ENCODE measurements at regions of chr11 and their contacts with region 1.

Region 1: DNA sequence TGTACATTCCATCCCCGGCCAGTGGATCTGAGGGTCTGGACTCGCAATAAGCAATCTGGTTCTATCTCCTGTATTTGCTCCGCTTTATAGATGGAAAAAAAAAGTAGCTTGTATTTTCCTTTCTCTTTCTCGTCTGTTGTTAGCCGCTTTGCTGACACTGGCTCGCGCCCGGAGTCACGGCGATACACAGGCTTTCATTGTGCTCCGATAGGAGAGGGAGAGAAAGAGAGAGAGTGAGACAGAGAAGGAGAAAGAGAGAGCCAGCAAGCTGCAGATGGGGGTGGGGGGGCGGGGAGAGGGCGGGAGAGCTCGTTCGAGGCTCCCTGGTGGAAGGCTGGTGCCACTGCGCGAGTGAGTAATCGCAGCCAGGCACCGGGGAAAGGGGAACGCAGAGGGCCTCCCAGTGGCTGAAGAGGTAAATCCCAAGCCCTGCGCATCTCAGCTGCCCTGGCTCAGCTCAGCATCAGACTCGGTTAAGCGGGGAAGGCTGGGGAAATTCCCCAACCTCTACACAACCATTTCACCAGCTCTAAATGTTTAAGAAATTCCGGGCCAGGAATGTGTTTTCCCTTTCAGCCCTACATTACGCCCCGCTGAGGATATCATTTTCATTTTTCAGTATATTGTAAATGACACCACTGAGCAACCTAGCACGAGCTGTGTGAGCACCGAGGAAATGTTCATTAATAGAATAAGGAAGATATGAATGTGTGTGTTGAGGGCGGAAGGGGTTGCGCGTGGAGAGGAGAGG is at the start of gene MAML2:
- DNase-seq: peak; percentile 76
- H3K4me3 ChIP-seq: peak within 1 kb of the TSS; percentile 81
- CTCF ChIP-seq: peak; percentile 94

Region 2: DNA sequence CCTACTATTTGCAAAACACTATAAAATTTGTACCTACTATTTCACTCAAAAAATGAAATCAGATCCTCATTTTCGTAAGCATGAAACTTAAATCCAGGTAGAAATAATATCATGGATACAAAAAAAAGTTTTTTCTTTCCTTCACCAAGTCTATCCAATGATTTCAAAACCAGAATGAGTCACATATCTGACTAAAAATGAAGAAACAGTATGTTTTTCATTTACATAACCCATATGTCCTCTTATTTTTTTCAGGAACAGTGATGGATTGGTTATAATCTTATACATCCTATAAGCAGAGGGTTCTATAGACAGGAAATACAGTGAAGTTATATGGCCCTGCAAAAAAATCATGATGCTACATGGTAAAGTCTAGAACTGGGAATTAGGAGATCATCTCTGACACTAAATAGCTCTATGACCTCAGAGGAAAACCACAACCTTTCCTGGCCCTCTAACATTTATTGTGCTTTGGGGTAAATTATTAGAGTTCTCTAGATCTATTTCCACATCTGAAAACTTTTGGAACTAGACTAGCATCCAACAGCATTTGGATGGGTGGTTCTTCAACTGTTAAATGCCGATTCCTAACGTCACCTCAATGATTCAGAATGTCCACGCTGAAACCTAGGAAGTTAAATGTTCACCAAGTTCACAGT is 430.1 kb before region 1 on chr11:
- CTCF ChIA-PET with region 1: no interaction called
- POLR2A ChIA-PET with region 1: no interaction called
- DNase-seq: no peak
- H3K4me3 ChIP-seq: no peak overlapping the region
- CTCF ChIP-seq: no peak

Region 3: GRCh38 chr11:96014217-96014616 is 328.9 kb before region 1 on chr11:
- CTCF ChIA-PET with region 1: interaction called, 14 read pairs
- POLR2A ChIA-PET with region 1: no interaction called
- DNase-seq: no peak
- H3K4me3 ChIP-seq: no peak overlapping the region
- CTCF ChIP-seq: no peak

Region 4: DNA sequence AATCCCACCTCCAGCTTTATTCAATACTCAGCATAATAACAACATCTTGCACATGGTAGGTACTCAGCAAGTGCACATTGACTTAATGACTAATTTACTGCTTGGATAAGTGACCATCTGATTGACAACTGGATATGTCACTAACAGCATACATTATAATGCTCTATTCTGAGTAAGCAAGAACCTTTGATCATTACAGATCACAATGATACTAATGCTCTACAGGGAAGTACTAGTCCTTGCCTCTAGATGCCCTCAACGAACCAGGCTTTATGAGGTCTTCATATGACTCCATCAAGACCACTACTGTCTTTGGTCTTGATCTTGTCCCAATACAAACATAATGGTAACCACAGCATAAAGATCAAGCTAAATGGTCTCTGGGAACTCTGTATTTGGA is 251.7 kb before region 1 on chr11:
- CTCF ChIA-PET with region 1: interaction called, 15 read pairs
- POLR2A ChIA-PET with region 1: interaction called, 6 read pairs
- DNase-seq: no peak
- H3K4me3 ChIP-seq: no peak overlapping the region
- CTCF ChIP-seq: no peak

Region 5: GRCh38 chr11:96162816-96163499 is 180.2 kb before region 1 on chr11:
- CTCF ChIA-PET with region 1: interaction called, 17 read pairs
- POLR2A ChIA-PET with region 1: interaction called, 10 read pairs
- DNase-seq: no peak
- H3K4me3 ChIP-seq: no peak overlapping the region
- CTCF ChIP-seq: no peak

Region 6: GRCh38 chr11:96228473-96228891 is 114.7 kb before region 1 on chr11:
- CTCF ChIA-PET with region 1: interaction called, 20 read pairs
- POLR2A ChIA-PET with region 1: no interaction called
- DNase-seq: peak; percentile 67
- H3K4me3 ChIP-seq: no peak overlapping the region
- CTCF ChIP-seq: no peak

Region 7: GRCh38 chr11:96254087-96254486 is 89.0 kb before region 1 on chr11:
- CTCF ChIA-PET with region 1: interaction called, 10 read pairs
- POLR2A ChIA-PET with region 1: interaction called, 3 read pairs
- DNase-seq: no peak
- H3K4me3 ChIP-seq: no peak overlapping the region
- CTCF ChIP-seq: no peak

Region 8: GRCh38 chr11:96389720-96390487 is 46.8 kb after region 1 on chr11 and contains the starts of genes CCDC82 and JRKL:
- CTCF ChIA-PET with region 1: interaction called, 14 read pairs
- POLR2A ChIA-PET with region 1: interaction called, 3 read pairs
- DNase-seq: peak; percentile 71
- H3K4me3 ChIP-seq: peak within 1 kb of the TSS; percentile 82
- CTCF ChIP-seq: no peak

Region 9: DNA sequence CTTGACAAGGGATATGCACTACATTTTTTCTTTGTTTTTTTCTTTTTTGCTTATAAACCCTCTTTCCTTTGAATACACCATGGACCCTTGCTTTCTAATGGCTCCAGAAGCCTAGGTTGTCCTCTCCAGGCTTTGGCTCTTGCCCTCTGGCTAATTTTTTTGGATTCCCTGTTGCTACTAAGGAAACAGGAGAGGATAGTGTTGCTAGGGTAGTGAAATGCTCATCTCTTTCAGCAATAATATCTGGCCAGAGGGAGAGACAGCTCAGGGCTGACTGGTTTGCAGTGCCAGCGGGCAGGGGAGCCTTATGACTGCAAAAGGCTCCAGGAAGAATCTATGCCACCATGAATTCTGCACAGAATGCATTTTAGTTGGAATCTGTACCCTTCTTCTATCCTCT is 262.8 kb after region 1 on chr11:
- CTCF ChIA-PET with region 1: no interaction called
- POLR2A ChIA-PET with region 1: no interaction called
- DNase-seq: no peak
- H3K4me3 ChIP-seq: no peak overlapping the region
- CTCF ChIP-seq: no peak

Region 10: GRCh38 chr11:96794152-96794551 is 451.0 kb after region 1 on chr11:
- CTCF ChIA-PET with region 1: no interaction called
- POLR2A ChIA-PET with region 1: no interaction called
- DNase-seq: no peak
- H3K4me3 ChIP-seq: no peak overlapping the region
- CTCF ChIP-seq: peak; percentile 2

Measured in AG04449 (cell line).